ENCODE measurements at regions of chr1 and their contacts with region 1.

Region 1: DNA sequence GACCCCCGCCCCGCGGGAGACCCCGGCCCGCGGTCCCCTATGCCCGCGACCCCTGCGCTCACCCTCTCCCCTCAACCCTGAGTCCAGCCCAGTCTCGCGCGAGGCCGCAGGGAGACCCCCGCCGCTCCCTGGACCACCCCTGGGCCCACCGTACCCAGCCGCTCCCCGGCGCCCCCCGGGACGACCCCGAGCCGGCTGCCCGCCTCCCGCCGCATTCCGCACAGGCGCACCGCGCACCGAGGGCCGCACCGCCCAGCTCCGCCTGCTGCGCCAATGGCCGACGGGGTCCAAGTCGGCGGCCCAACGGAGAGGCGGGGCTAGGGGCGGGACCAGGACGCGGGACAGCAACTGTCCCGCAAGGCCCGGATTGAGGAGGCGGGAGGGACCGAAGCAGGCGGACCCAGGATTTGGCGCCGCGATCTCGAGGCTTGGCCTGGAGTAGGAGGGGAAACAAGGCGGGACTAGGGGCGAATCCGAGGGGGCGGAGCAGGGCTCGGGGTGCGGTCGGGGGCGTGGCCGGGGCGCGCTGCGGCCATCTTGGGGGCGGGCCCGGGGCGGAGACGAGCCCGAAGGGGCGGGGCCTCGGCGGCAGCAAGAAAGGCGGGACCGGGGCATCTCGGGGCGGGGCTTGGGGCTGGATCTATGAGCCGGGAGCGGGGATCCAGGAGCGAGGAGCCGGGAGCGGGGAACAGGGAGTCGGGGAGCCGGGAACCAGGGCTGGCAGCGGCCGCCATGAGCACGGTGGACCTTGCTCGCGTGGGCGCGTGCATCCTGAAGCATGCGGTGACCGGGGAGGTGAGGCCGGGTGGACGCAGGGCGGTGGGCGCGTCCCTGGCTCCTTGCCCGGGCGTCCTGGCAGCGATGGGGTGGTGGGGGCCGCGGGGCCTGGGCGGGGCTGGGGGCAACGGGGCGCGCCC is at the start of gene PRXL2B:
- DNase-seq: peak; percentile 98 to 100 (median 99)

Region 2: GRCh38 chr1:2205191-2205952 is 381.0 kb before region 1 on chr1:
- intact Hi-C with region 1: loop called (anchors 10 kb)
- DNase-seq: peak; percentile 88 to 99 (median 94)

Region 3: DNA sequence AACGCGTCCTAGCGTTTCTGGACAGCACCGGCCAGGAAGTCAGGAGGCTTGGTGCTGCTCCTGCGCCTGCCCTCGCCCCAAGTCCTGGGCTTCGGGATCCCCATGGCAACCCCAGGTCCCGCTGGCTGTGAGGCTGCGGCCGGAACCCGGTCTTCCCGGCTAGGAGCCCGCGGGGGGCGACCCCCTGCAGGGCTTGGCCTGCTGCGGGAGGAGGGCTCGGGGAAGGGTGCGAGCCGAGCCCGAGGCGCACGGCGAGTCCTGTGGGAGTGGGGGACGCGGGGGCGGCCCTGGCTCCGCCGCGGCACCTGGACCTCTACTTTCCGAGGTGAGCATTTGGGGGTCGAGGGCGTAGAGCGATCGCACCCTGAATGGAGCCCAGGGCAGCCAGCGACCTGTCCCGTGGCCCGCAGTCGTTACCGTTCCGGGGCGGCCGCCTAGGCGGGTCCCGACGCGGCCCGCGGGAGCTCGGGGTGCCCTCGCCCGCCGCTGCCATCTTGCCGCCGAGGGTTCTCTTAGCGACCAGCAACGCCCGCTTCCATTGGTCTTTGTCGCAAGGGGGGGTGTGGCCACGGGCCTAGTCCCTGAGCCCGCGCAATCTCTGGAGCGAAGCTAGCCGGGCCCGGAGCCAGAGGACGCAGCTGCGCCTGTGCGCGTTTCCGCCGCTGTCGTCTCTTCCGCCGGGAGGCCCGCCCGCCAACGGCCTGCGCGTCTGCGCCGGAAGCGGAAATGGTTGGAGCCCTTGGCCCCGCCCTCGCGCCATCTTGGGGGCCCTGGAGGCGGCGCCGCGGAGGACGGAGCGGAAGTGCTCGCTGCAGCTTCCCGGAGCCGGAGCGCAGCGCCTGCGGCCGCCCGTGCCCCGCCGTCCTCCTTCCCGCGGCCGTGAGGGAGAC is 195.1 kb before region 1 on chr1 and contains the starts of genes MORN1 and RER1:
- intact Hi-C with region 1: loop called (anchors 1 kb)
- DNase-seq: peak; percentile 98 to 100 (median 99)

Region 4: DNA sequence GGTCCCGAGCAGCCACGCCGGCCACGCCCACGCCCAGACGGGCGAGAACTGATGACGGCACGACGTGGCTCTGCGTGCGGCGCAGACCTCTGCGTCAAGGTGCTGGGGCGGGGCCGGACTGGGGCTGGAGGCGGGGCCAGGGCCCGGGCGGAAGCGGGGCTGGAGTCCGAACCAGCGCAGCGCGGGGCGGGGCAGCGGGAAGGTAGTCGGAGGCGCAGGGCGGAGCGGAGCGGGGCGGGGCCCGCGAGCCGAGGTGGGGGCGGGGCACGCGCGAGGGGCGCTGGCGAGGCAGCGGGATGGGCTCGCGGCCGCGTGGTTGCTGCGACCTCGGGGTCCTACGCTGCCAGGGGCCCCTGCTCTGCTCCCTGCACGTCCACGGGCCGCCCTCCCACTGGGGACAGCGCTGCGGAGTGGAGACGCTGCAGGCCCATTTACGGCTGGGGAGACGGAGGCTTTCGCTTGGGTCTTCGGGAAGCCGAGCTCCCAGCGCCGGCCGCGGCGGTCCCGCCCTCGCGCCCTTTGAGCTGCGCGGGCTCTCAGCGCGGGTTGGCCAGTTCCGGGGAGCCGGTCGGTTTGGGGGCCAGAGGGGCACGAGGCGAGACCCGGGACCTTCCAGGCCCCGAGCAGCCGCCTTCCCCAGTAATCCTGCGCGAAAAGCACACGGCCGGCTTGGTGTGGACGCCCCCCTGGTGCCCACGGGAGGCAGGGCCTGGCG is 173.7 kb before region 1 on chr1 and contains the start of gene PEX10:
- intact Hi-C with region 1: loop called (anchors 2 kb)
- DNase-seq: peak; percentile 93 to 100 (median 96)

Region 5: DNA sequence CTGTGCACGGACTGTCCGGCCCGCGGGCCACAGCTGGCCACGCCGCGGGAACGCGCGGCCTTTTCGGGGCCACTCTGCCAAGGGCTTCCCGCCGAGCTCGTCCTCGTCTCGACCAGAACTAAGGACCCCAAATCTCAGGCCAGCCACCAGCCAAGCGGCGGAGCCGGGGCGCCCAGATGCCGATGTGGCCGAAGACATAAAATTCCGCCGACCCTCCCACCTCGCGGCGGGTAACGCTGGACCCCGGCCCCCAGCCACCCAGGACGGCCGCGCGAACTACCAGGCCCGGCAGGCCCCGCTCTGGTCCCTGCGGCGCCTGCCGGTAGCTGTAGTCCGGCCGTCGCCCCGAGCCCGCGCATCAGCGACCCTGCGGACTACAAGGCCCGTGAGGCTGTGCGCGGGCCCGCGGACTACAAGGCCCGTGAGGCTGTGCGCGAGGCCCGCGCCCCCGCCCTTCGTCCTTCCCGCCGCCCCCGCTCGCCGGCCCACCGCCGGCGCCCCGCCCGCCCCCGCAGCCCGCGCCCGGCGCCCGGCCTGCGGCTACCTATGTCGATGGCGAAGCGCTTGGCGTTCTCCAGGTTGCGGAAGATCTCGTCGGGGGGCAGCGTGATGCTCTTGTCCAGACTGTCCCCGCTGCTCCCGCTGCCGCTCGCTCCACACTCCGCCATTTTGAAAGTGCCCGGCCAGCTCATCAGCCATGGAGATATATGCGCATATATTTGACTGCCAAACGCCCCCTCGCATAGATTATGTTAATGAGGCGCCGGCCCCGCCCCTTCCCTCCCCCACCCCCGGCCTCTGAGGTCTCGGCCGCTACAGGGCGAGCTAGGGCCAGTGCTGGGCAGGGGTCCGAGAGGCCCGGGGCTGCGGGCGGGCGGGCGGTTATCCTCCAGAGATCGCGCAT is 60.2 kb before region 1 on chr1 and contains the start of gene PANK4:
- intact Hi-C with region 1: loop called (anchors 2 kb)
- DNase-seq: peak; percentile 84 to 99 (median 91)

Region 6: DNA sequence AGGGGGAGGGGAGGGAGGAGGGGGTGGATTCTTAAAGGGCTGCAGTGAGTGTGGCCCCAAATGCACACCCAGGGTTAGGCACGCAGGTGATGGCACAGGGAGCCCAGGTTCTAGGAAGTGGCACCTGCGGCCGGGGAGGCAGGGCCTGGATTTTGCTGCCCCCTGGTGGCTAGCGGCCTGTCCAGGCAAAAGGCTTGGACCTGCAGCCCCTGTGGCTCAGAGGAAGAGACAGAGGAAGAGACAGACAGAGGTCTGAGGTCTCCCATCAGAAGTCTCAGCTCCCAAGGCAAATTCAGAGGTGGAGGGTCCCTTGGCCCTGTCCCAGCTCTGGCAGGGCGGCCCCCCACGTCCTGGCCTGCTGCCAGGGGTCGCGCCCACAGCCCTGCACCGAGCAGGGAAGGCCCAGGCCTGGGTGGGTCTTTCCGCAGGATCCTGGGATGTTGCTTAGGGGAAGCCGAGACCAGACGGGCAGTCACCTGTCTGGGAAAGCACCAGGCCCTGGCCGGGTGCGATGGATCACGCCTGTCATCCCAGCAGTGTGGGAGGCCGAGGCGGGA is 38.3 kb before region 1 on chr1:
- intact Hi-C with region 1: loop called (anchors 2 kb)
- DNase-seq: peak; percentile 72 to 97 (median 84)

Region 7: DNA sequence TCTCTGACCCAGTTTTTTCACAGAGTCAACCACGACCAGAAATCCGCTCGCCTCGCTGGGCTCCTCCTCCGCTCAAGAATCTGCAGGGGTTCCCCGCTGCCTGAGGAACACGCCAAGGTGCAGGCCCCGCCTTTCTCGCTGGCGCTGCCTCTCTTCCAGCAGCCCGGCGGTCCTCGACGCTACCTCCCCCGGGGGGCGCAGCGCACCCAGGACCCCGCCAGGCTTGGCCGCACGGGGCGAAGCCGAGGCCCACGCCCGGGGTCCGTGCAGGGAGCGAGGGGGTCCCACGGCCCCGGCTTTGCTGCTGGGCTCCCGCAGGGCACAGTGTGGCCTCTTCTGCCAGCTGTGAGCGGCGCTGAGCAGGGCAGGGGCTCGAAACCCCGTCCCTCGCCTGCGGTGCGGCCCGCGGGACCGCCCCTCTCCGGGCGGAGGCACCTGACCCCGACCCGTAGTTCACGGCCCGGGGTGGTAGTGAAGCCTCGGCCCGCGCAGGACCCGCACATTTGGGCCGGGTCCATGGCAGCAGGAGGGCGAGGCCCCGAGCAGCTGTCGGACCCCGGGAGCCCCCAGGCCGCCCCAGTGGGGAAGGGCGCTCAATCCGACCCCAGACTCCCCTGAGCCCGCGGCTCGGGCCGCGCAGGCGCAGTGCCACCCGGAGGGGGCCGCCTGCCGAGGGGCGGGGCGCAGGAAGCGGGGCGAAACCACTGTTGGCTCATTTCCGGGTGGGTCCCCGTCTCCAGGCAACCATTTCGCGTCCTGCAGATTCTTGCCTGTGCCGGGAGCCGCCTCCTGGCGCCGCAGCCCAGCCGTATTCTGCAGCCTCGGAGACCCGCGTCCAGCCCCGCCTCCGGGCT is 56.4 kb after region 1 on chr1:
- intact Hi-C with region 1: loop called (anchors 10 kb)
- DNase-seq: peak; percentile 80 to 98 (median 91)

Measured in posterior cingulate gyrus (tissue), 11 donors.